Psoas muscle (tissue), 8 donors: ENCODE measurements at regions of chr11 and their contacts with region 1.

Region 1: DNA sequence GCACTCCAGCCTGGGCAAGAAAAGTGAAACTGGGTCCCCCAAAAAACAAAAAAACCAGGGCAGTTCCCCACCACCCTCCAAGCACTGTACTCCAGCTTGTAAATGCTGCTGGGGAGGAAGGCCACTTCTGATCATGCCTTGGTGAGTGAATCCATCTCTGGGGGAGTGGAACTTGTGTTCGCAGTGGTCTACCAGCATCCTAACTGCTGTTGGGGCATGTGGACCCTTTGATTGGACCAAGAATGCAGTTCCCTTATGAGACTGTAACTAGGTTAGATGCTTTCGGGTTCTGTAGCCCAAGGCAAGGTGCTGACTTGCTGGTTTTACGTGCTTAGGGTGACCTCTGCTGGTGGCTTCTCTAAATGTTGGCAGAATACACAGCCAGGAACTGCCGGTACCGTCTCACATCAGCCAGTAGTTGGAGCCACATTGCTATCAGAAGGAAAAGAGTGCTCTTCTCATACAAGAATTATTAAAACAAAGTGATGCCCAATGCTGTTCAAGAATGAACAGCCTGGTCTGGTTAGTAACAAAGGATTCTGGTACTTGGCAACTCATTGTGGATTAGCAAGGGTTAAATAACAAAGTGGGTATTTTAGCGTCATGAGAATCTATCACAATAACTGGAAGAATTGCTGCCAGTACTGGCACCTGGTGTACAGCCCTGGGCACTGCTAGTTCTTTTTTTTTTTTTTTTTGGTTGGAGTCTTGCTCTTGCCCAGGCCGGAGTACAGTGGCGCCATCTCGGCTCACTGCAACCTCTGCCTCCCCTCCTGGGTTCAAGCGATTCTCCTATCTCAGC is 13.0 kb downstream of the EIF1AD start:
- DNase-seq: peak; percentile 83 to 85
- ATAC-seq: peak; percentile 95 to 99 (median 98)
- H3K4me3 ChIP-seq: no peak overlapping the region
- H3K27ac ChIP-seq: no peak overlapping the region
- H3K4me1 ChIP-seq: peaks cover 3% of the 10 kb centered on the region
- H3K27me3 ChIP-seq: no peaks in the 10 kb centered on the region
- CTCF ChIP-seq: peak; percentile 95

Region 2: DNA sequence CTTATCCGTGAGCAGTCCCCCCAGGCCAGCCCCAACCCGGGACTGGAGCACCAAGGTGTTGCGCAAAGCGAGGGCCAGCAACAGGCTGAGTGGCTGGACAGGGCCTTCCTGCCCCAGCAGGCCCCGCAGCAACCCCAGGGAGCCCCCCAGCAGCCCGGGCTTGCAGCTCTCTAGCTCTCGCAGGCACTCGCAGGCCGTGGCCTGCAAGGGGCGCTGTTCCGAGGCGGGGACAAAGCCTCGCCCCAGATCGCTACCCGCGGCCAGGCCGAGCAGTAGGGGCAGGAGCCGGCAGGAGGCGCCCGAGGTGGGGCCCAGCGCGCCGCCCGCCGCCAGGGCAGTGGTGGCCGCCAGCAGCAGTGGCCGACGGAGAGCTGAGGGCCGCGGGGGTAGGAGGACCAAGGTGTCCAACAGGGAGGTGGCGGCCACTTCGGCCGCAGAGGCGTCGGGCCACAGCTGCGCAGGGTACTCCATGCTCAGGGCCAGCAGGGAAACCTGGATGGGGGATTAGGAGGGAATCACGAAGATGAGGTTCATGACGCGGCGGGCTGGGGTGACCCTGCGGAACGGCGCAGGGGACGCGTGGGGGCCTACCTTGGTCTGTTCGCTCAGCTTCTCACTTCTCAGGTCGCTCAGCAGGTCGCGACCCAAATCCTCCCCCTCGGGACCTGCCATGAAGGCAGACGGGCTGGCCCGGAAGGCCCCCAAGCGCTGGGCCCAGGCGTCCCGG is 209.0 kb before region 1 on chr11:
- intact Hi-C with region 1: loop called in 1 of 2 experiments (anchors 5 kb)
- DNase-seq: peak; percentile 84 to 89
- ATAC-seq: peak; percentile 79 to 87 (median 85)
- H3K4me3 ChIP-seq: peak overlapping the region; percentile 96
- H3K27ac ChIP-seq: peak overlapping the region; percentile 79
- H3K4me1 ChIP-seq: peaks cover 20% of the 10 kb centered on the region
- H3K27me3 ChIP-seq: peaks cover 0 to 6% (median under 1%) of the 10 kb centered on the region in 3 donors
- CTCF ChIP-seq: peak; percentile 85